Stomach (tissue), 19 donors: ENCODE measurements at regions of chr12 and their contacts with region 1.

Region 1: GRCh38 chr12:25397001-25397400 is 146.3 kb upstream of the KRAS start:
- DNase-seq: no peak
- H3K4me3 ChIP-seq: no peak overlapping the region
- H3K27ac ChIP-seq: no peak overlapping the region
- H3K4me1 ChIP-seq: no peaks in the 10 kb centered on the region
- H3K27me3 ChIP-seq: no peaks in the 10 kb centered on the region
- CTCF ChIP-seq: no peak
- EP300 ChIP-seq: no peak
- POLR2A ChIP-seq: no peak

Region 2: DNA sequence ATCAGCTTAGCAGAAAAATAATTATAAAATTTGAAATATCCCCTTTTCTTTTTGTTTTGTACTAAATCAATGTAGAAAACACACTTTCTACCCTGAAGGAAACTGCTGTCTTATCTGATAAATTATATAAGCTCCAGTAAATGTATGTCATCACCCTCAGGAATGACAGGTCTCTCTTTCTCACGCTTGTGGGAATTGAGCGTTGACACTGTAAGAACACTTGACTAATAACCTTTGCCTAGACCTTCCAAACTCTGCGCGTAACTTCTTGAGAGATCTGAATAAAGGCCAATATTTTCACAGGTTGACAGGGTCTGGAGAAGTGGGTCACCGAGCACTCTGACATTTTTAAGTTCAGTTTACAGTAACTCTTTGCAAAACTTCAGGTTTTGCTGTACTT is 586.6 kb before region 1 on chr12:
- intact Hi-C with region 1: no loop called
- DNase-seq: no peak
- H3K4me3 ChIP-seq: no peak overlapping the region
- H3K27ac ChIP-seq: no peak overlapping the region
- H3K4me1 ChIP-seq: peaks cover 0 to 9% (median 4%) of the 10 kb centered on the region in 4 donors
- H3K27me3 ChIP-seq: no peaks in the 10 kb centered on the region
- CTCF ChIP-seq: no peak
- EP300 ChIP-seq: no peak
- POLR2A ChIP-seq: no peak

Region 3: GRCh38 chr12:25236190-25236589 is 160.8 kb before region 1 on chr12:
- intact Hi-C with region 1: loop called (anchors 10 kb)
- DNase-seq: no peak
- H3K4me3 ChIP-seq: no peak overlapping the region
- H3K27ac ChIP-seq: no peak overlapping the region
- H3K4me1 ChIP-seq: peaks cover 7 to 39% (median 12%) of the 10 kb centered on the region in 4 donors
- H3K27me3 ChIP-seq: no peaks in the 10 kb centered on the region
- CTCF ChIP-seq: no peak
- EP300 ChIP-seq: no peak
- POLR2A ChIP-seq: no peak

Region 4: GRCh38 chr12:25458047-25458552 is 61.1 kb after region 1 on chr12:
- intact Hi-C with region 1: no loop called
- DNase-seq: peak in 1 of 2 donors; percentile 22
- H3K4me3 ChIP-seq: no peak overlapping the region
- H3K27ac ChIP-seq: no peak overlapping the region
- H3K4me1 ChIP-seq: no peaks in the 10 kb centered on the region
- H3K27me3 ChIP-seq: peaks cover 0 to under 1% (median 0%) of the 10 kb centered on the region in 3 donors
- CTCF ChIP-seq: no peak
- EP300 ChIP-seq: no peak
- POLR2A ChIP-seq: no peak